ENCODE measurements at regions of chr3 and their contacts with region 1.

Region 1: GRCh38 chr3:107938143-107938542 is 152.7 kb downstream of the CD47 start:
- DNase-seq: no peak
- ATAC-seq: no peak
- H3K4me3 ChIP-seq: no peak overlapping the region
- H3K27ac ChIP-seq: no peak overlapping the region
- H3K4me1 ChIP-seq: no peaks in the 10 kb centered on the region
- H3K27me3 ChIP-seq: no peaks in the 10 kb centered on the region

Region 2: GRCh38 chr3:107718547-107718946 is 219.6 kb before region 1 on chr3:
- intact Hi-C with region 1: no loop called
- DNase-seq: no peak
- ATAC-seq: no peak
- H3K4me3 ChIP-seq: no peak overlapping the region
- H3K27ac ChIP-seq: no peak overlapping the region
- H3K4me1 ChIP-seq: peaks cover 0 to 2% of the 10 kb centered on the region in 2 donors
- H3K27me3 ChIP-seq: no peaks in the 10 kb centered on the region

Region 3: GRCh38 chr3:107927361-107928083 is 10.6 kb before region 1 on chr3:
- intact Hi-C with region 1: no loop called
- DNase-seq: peak; percentile 74 to 90
- ATAC-seq: peak; percentile 95
- H3K4me3 ChIP-seq: peak overlapping the region; percentile 30 to 54
- H3K27ac ChIP-seq: no peak overlapping the region
- H3K4me1 ChIP-seq: no peaks in the 10 kb centered on the region
- H3K27me3 ChIP-seq: no peaks in the 10 kb centered on the region

Region 4: DNA sequence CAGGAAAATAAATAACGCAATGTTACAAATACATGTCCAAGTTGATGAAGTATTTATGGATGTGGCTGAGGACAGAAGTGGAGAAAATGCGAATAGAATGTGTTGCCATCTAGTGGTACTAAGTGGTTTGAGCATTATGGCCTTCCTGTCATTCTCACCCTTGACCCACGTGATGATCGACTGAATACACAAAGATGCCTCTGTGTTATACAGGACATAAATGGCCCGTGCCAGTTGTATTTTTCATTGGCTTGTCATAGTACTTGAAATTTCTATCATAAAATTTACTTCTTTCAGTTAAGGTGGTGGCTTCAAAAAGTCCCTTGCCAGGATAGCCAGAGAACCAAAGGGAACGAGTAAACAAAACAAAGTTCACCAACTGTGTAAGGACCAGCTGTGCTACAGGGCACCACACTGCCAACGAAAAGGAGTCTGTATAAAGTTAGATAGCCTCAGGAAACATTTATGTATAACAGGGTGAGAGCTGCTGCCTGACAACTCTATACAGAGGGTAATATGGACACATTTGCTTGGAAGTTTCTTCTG is 468.6 kb after region 1 on chr3:
- intact Hi-C with region 1: loop called in 1 of 2 experiments (anchors 5 kb)
- DNase-seq: no peak
- ATAC-seq: peak; percentile 54
- H3K4me3 ChIP-seq: no peak overlapping the region
- H3K27ac ChIP-seq: no peak overlapping the region
- H3K4me1 ChIP-seq: no peaks in the 10 kb centered on the region
- H3K27me3 ChIP-seq: no peaks in the 10 kb centered on the region

Region 5: GRCh38 chr3:108477511-108478147 is 539.5 kb after region 1 on chr3:
- intact Hi-C with region 1: loop called in 1 of 2 experiments (anchors 5 kb)
- DNase-seq: no peak
- ATAC-seq: peak; percentile 75
- H3K4me3 ChIP-seq: no peak overlapping the region
- H3K27ac ChIP-seq: no peak overlapping the region
- H3K4me1 ChIP-seq: no peaks in the 10 kb centered on the region
- H3K27me3 ChIP-seq: no peaks in the 10 kb centered on the region